K562 (cell line): ENCODE measurements at regions of chr11 and their contacts with region 1.

Region 1: GRCh38 chr11:68383976-68384501 is 71.6 kb downstream of the LRP5 start:
- DNase-seq: peak; percentile 67 to 81 (median 76)
- ATAC-seq: peak; percentile 76
- H3K4me3 ChIP-seq: no peak overlapping the region
- H3K27ac ChIP-seq: no peak overlapping the region
- H3K4me1 ChIP-seq: peaks cover 0 to 23% of the 10 kb centered on the region in 2 experiments; a peak in 1 of 5 replicates
- H3K27me3 ChIP-seq: no peaks in the 10 kb centered on the region
- CTCF ChIP-seq: peak; percentile 85 to 96 (median 91)
- EP300 ChIP-seq: no peak
- POLR2A ChIP-seq: no peak
- RAD21 ChIP-seq: peak; percentile 70 to 79

Region 2: DNA sequence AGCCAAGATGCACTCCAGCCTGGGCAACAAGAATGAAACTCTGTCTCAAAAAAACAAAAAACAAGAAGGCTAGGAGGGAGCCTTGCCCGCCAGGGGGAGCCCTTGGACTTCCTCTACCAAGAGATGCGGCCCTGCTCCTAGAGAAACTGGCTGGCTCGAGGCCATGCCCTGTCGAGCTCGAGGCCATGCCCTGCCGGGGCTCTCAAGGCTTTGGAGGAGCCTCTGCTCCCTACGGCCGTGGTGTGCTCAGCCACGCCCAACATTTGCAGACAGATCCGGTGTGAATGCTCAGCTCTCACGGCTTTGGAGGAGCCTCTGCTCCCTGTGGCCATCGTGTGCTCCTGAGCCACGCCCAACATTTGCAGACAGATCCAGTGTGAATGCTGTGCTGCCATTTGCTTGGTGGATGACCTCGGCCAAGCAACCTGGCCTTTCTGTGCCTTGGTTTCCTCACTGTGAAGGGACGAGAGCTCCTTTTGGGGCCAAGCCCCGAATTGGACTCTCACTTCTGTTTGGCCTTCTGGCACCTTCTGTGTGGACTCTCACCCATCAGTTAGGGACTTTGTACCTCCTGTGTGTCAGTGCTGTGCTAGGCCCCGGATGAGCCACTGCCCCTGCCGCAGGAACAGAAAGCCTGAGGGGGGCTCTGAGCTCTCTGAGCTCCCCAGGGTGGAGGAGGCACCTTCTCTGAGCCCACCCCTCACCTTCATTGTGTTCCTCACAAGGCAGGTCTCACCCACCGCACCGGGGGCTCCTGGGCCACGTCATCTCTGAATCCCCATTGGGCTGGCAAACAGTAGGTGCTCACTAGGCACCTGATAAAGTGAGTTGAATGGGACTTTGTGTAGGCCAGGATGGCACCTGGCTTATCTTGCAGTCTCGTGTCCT is 126.3 kb before region 1 on chr11:
- CTCF ChIA-PET with region 1: interaction called, 11 read pairs
- POLR2A ChIA-PET with region 1: no interaction called
- in situ Hi-C with region 1: no loop called
- intact Hi-C with region 1: loop called (anchors 5 kb)
- DNase-seq: peak; percentile 83 to 90 (median 84)
- ATAC-seq: peak; percentile 84
- H3K4me3 ChIP-seq: no peak overlapping the region
- H3K27ac ChIP-seq: no peak overlapping the region
- H3K4me1 ChIP-seq: peaks cover 9 to 15% of the 10 kb centered on the region in 2 experiments; a peak in 4 of 5 replicates
- H3K27me3 ChIP-seq: no peaks in the 10 kb centered on the region
- CTCF ChIP-seq: peak; percentile 85 to 90 (median 88)
- EP300 ChIP-seq: no peak
- POLR2A ChIP-seq: no peak
- RAD21 ChIP-seq: peak; percentile 97 to 98

Region 3: DNA sequence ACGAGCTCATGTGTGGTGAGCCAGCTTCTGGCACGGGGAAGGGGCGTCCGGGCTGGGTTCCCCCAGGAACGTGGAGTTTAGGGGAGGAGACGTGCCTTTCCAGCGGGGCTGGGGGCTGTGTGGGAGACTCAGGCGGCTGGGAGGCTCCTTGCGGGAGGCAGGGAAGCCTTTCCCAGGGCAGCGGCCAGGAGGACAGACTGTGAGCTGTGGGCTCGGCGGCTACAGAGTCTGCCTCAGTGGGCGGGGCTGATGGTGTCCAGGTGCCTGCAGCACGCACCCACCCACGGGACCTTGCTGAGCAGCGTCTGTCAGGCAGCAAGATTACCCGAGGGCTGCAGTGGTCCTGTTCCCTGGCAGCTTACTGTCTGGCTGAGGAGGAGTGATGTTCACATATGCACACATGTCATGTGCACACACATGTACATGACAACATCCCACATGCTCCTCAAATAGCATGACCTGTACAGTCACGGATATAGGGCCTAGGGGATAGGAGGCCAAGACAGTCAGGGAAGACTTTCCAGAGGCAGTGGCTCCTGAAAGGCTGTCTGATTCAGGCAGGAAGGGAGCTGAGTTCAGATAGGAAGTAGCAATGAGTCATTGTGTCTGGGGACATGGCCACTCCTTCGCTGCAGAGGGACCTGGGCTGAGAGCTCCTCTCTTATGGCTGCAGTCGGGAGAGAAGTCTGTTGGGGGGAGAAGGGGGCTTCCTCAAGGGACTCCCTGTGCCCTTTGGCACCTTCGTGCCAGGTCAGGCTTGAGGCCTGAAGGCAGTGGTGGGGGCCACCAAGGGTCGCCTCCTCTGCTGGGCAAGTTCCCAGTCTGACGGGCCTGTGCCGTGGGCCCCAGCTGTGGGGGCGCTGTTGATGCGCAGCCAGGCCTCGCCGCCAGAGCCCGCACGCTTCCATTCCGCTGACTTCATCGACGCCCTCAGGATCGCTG is 53.2 kb after region 1 on chr11:
- CTCF ChIA-PET with region 1: no interaction called
- POLR2A ChIA-PET with region 1: no interaction called
- in situ Hi-C with region 1: no loop called
- intact Hi-C with region 1: no loop called
- DNase-seq: peak; percentile 67 to 82 (median 68)
- ATAC-seq: peak; percentile 91
- H3K4me3 ChIP-seq: no peak overlapping the region
- H3K27ac ChIP-seq: peak overlapping the region; percentile 79; the same call in 2 of the 3 replicates
- H3K4me1 ChIP-seq: peaks cover 15 to 44% of the 10 kb centered on the region in 2 experiments; a peak in 4 of 5 replicates
- H3K27me3 ChIP-seq: no peaks in the 10 kb centered on the region
- CTCF ChIP-seq: peak; percentile 52 to 66 (median 55)
- EP300 ChIP-seq: no peak
- POLR2A ChIP-seq: no peak
- RAD21 ChIP-seq: peak in 1 of 2 experiments; percentile 24; a peak in 1 of 4 replicates